Psoas muscle (tissue), 8 donors: ENCODE measurements at regions of chr10 and their contacts with region 1.

Region 1: GRCh38 chr10:27661514-27662286 is 83.9 kb downstream of the MKX start:
- DNase-seq: no peak
- ATAC-seq: no peak
- H3K4me3 ChIP-seq: no peak overlapping the region
- H3K27ac ChIP-seq: no peak overlapping the region
- H3K4me1 ChIP-seq: peaks cover 4% of the 10 kb centered on the region
- H3K27me3 ChIP-seq: no peaks in the 10 kb centered on the region
- CTCF ChIP-seq: no peak

Region 2: DNA sequence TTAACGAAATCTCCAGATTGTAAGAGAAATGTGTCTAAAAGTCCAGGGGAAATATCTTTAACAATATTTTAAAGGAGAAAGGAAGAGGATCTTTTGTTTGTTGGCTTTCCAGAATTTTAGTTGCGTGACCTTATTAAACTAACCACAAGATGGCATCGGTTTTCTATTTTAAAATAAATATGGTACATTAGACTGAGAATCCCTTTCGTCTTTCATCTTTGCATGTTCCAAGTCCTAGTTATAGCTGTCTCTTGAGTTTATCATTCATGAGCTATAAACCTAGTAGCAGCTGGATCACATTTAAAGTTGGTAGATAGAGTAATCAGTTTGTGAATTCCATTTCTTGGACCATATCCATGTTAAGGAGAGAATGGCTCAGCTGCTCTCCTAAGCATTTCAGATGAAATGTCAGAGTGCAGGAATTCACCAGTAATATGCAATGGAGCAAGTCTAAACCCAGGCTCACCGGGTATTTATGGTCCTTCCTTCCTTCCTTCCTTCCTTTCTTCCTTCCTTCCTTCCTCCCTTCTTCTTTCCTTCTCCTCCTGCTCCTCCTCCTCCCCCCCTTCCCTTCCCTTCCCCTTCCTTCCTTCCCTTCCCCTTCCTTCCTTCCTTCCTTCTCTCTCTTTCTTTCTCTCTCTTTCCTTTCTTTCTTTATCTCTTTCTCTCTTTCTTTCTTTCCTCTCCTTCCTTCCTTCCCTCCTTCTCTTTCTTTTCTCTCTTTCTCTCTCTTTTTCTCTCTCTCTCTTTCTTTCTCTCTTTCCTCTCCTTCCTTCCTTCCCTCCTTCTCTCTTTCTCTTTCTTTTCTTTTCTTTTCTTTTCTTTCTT is 215.4 kb before region 1 on chr10:
- intact Hi-C with region 1: loop called (anchors 2 to 5 kb)
- DNase-seq: no peak
- ATAC-seq: peak in 1 of 4 donors; percentile 56
- H3K4me3 ChIP-seq: no peak overlapping the region
- H3K27ac ChIP-seq: no peak overlapping the region
- H3K4me1 ChIP-seq: no peaks in the 10 kb centered on the region
- H3K27me3 ChIP-seq: no peaks in the 10 kb centered on the region
- CTCF ChIP-seq: peak; percentile 50

Region 3: DNA sequence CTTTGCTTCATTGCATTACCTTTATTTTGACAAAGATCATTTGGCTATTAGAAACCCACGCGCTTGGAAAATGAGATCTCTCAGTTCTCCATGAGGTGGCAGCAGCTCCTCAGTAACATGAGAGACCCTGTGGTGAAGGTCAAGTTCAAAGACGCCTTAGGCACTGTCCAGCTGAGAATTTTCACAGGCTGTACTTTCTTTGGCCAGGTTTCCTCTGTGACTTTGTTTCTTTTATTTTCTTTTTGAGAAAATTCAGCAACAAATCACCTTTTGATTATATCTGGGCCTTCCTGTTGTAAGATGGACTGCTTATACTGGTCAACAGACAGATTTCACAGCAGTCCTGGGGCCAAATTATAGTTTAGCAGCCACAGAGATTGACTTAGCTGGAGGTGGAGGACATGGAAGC is 103.1 kb before region 1 on chr10:
- intact Hi-C with region 1: loop called in 1 of 2 experiments (anchors 5 kb)
- DNase-seq: peak in 1 of 2 donors; percentile 29
- ATAC-seq: peak; percentile 80 to 92 (median 82)
- H3K4me3 ChIP-seq: no peak overlapping the region
- H3K27ac ChIP-seq: no peak overlapping the region
- H3K4me1 ChIP-seq: no peaks in the 10 kb centered on the region
- H3K27me3 ChIP-seq: no peaks in the 10 kb centered on the region
- CTCF ChIP-seq: peak; percentile 70